ENCODE measurements at regions of chr9 and their contacts with region 1.

Region 1: DNA sequence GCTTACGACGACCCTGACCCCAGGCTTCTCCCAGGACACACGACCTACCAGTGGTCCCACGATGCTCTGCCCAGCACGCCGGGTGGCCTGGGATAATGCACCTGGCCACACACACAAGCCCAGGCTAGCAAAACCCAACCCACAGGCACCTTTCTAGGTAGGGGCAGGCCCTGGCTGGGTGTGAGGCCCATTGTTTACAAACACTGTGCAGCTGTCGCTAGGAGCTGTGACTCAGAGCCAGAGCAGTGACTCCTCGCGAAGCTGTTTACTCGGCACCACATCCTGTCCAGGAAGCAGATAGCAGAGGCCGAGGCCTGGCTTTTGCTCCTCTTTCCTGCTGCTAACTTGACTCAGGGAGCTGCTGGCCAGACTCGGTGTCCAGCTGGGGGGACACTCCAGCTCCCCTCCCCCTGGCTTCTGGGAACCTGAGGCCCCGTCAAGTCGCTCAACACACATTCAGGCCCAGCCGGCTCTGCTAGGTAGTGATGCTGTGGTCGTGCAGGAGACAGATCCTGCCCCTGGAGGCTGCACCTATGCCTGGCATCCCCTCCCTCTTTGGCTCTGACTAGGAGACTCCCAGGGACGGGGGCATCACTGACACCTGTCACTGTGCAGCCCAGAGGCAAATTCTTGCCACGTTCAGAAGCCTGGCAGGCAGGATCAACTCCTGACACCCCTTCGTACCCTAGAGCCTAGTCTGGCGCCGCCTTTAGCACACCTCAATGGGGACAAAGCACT is 12.8 kb upstream of the RALGDS start:
- DNase-seq: peak; percentile 97
- H3K4me3 Mint-ChIP-seq: peak overlapping the region; percentile 68
- H3K27ac Mint-ChIP-seq: peak overlapping the region; percentile 100
- H3K4me1 Mint-ChIP-seq: peaks cover 61% of the 10 kb centered on the region
- H3K27me3 Mint-ChIP-seq: no peaks in the 10 kb centered on the region

Region 2: GRCh38 chr9:133115448-133116345 is 18.2 kb before region 1 on chr9:
- intact Hi-C with region 1: loop called (anchors 2 kb)
- DNase-seq: peak; percentile 88
- H3K4me3 Mint-ChIP-seq: peak overlapping the region; percentile 73
- H3K27ac Mint-ChIP-seq: peak overlapping the region; percentile 91
- H3K4me1 Mint-ChIP-seq: peaks cover 48% of the 10 kb centered on the region
- H3K27me3 Mint-ChIP-seq: no peaks in the 10 kb centered on the region

Region 3: GRCh38 chr9:133121198-133121939 is 12.5 kb before region 1 on chr9 and contains the start of gene RALGDS:
- intact Hi-C with region 1: loop called (anchors 1 kb)
- DNase-seq: peak; percentile 96
- H3K4me3 Mint-ChIP-seq: peak within 1 kb of the TSS; percentile 84
- H3K27ac Mint-ChIP-seq: peak within 1 kb of the TSS; percentile 93
- H3K4me1 Mint-ChIP-seq: peaks cover 58% of the 10 kb centered on the region
- H3K27me3 Mint-ChIP-seq: no peaks in the 10 kb centered on the region
- total RNA-seq, gene RALGDS: 93.0 and 96.7 TPM in 2 replicates